Heart left ventricle (tissue), 16 donors: ENCODE measurements at regions of chr4 and their contacts with region 1.

Region 1: GRCh38 chr4:158051401-158052235 is 121.2 kb downstream of the GASK1B start:
- DNase-seq: peak in 3 of 5 donors; percentile 13 to 49 (median 49)
- ATAC-seq: peak; percentile 73 to 94 (median 83)
- H3K4me3 ChIP-seq: no peak overlapping the region
- H3K27ac ChIP-seq: peak overlapping the region in 10 of 12 donors; percentile 2 to 73 (median 43)
- H3K4me1 ChIP-seq: peaks cover 0 to 12% (median 0%) of the 10 kb centered on the region in 12 donors
- H3K27me3 ChIP-seq: no peaks in the 10 kb centered on the region
- CTCF ChIP-seq: no peak
- POLR2A ChIP-seq: no peak

Region 2: GRCh38 chr4:158006990-158007389 is 44.6 kb before region 1 on chr4:
- intact Hi-C with region 1: loop called in 1 of 10 experiments (anchors 10 kb)
- DNase-seq: peak in 2 of 5 donors; percentile 51 to 67
- ATAC-seq: peak; percentile 35 to 92 (median 77)
- H3K4me3 ChIP-seq: peak overlapping the region in 2 of 12 donors; percentile 1 to 6
- H3K27ac ChIP-seq: peak overlapping the region in 10 of 12 donors; percentile 47 to 79 (median 64)
- H3K4me1 ChIP-seq: peaks cover 0 to 76% (median 38%) of the 10 kb centered on the region in 12 donors
- H3K27me3 ChIP-seq: no peaks in the 10 kb centered on the region
- CTCF ChIP-seq: no peak
- POLR2A ChIP-seq: no peak

Region 3: DNA sequence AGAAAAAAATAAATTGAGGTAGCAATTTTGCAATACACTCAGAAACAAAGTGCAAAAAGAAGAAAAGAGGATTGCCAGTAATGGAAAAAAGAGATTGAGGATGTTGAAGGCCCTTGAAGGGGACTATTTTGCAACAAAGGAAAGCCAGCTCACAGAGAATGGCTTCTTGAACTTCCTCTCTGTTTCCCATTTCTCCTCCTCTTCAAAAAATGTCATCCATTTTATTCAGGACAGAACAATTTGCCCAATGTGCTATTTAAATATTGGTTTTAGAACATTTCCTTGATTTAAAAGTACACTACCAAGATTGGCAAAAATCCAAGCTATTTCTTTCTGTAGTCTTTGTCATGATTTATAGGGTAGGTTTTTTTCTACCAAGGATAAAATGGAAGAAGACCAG is 61.0 kb after region 1 on chr4:
- intact Hi-C with region 1: loop called in 1 of 10 experiments (anchors 10 kb)
- DNase-seq: no peak
- ATAC-seq: peak in 1 of 4 donors; percentile 31
- H3K4me3 ChIP-seq: no peak overlapping the region
- H3K27ac ChIP-seq: peak overlapping the region in 1 of 12 donors; percentile 39
- H3K4me1 ChIP-seq: peaks cover 0 to 14% (median 0%) of the 10 kb centered on the region in 12 donors
- H3K27me3 ChIP-seq: no peaks in the 10 kb centered on the region
- CTCF ChIP-seq: no peak
- POLR2A ChIP-seq: no peak

Region 4: DNA sequence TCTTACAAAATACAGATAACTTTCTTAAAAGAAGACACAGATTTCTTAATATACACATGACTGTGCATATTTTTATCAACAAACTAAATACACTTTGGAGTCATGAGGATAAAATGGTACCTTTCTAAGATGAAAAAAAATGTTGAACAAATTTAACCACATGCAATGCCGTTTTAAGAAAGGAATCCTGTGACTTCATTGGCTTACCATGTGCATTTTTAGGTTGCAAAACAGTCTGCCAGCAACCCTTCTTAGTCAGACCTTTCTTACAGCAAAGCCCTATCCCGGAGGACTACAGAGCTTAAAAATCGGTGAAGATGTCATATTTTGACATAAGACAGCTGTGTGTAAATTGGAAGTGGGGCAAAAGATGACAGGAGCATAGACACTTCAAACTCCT is 69.6 kb after region 1 on chr4:
- intact Hi-C with region 1: loop called in 2 of 10 experiments (anchors 10 kb)
- DNase-seq: peak in 4 of 5 donors; percentile 22 to 36 (median 32)
- ATAC-seq: peak; percentile 62 to 90 (median 87)
- H3K4me3 ChIP-seq: peak overlapping the region in 3 of 12 donors; percentile 1 to 3 (median 3)
- H3K27ac ChIP-seq: peak overlapping the region in 10 of 12 donors; percentile 2 to 79 (median 50)
- H3K4me1 ChIP-seq: peaks cover 0 to 38% (median 15%) of the 10 kb centered on the region in 12 donors
- H3K27me3 ChIP-seq: no peaks in the 10 kb centered on the region
- CTCF ChIP-seq: no peak
- POLR2A ChIP-seq: no peak